Dendritic cell treated with granulocyte-macrophage colony-stimulating factor and Interleukin-4, amounts not matched to agents 40 ng/mL and 50 ng/mL, for 4 days (primary cell): ENCODE measurements at regions of chr4 and their contacts with region 1.

Region 1: GRCh38 chr4:26288355-26288909 is 32.4 kb upstream of the RBPJ start:
- H3K4me3 Mint-ChIP-seq: peak overlapping the region; percentile 32
- H3K27ac Mint-ChIP-seq: peak overlapping the region; percentile 96
- H3K4me1 Mint-ChIP-seq: peaks cover 37% of the 10 kb centered on the region
- H3K27me3 Mint-ChIP-seq: no peaks in the 10 kb centered on the region

Region 2: GRCh38 chr4:26223161-26223560 is 65.3 kb before region 1 on chr4:
- intact Hi-C with region 1: no loop called
- H3K4me3 Mint-ChIP-seq: no peak overlapping the region
- H3K27ac Mint-ChIP-seq: peak overlapping the region; percentile 33
- H3K4me1 Mint-ChIP-seq: peaks cover 36% of the 10 kb centered on the region
- H3K27me3 Mint-ChIP-seq: peaks cover 3% of the 10 kb centered on the region

Region 3: DNA sequence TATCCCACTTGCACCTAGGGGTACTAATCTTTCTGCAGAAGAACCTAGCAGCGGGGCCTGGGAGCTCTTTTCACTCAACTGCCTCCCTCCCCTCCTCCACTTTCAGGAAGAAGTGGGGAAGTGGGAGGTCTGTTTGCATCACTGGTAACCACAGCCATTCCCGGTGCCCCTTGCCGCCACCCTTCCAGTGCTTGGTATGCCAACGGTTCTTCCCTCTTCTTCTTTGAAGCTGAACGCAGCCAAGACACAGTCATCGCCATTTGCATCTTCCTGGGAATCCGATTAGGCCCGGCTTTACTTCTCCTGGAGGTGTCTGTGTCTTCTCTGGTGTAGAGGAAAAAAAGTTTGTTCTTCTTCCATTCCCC is 14.8 kb before region 1 on chr4:
- intact Hi-C with region 1: loop called (anchors 2 kb)
- H3K4me3 Mint-ChIP-seq: peak overlapping the region; percentile 72
- H3K27ac Mint-ChIP-seq: peak overlapping the region; percentile 90
- H3K4me1 Mint-ChIP-seq: peaks cover 74% of the 10 kb centered on the region
- H3K27me3 Mint-ChIP-seq: no peaks in the 10 kb centered on the region

Region 4: DNA sequence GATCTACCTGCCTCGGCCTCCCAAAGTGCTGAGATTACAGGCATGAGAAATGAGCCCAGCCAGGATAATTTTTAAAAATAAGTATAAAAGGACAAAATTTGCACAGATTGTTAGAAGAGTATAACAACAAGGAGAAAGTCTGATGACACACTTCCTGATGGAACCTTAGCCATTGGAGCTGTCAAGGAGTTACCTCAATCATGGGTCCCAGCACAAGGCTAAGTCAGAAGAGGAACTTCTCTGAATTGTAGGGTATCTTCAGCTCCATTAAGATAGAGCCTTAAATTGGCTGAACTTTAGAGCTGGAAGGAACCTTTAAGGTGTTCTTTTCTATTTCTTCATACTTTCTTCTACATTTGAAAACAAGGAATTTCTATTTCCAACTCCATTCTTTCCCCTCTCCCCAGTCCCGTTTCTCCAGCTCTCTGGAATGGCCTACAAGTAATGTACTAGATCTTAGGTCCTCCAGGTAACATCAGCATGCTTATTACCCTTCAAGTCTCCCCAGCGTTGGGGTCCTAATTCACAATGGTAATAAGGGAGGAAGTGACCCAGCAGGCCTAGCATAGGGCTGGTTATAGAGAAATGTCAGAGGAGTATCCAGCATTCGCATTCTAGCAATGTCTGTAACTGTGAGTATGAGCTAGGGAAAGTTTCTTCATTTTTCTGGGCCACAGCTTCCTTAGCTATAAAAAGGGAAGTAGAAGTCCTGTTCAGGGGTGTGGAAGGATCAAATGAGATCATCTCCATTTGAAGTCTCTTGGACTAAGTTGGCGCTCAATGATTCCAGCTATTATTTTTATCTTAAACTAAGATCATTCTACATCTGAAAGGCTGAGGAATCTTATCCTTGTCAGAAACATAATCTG is 13.8 kb after region 1 on chr4:
- intact Hi-C with region 1: loop called (anchors 2 kb)
- H3K4me3 Mint-ChIP-seq: no peak overlapping the region
- H3K27ac Mint-ChIP-seq: peak overlapping the region; percentile 89
- H3K4me1 Mint-ChIP-seq: peaks cover 31% of the 10 kb centered on the region
- H3K27me3 Mint-ChIP-seq: no peaks in the 10 kb centered on the region